Right cardiac atrium (tissue), 5 donors: ENCODE measurements at regions of chr1 and their contacts with region 1.

Region 1: GRCh38 chr1:44213222-44214112 is at the start of gene DMAP1:
- DNase-seq: peak; percentile 78 to 91 (median 90)
- ATAC-seq: peak; percentile 90 to 93
- H3K4me3 ChIP-seq: peak within 1 kb of the TSS; percentile 61
- H3K27ac ChIP-seq: peak within 1 kb of the TSS; percentile 28
- H3K4me1 ChIP-seq: peaks cover 8% of the 10 kb centered on the region
- H3K27me3 ChIP-seq: no peaks in the 10 kb centered on the region
- total RNA-seq, gene DMAP1: 26.2 to 35.9 (median 32.6) TPM

Region 2: DNA sequence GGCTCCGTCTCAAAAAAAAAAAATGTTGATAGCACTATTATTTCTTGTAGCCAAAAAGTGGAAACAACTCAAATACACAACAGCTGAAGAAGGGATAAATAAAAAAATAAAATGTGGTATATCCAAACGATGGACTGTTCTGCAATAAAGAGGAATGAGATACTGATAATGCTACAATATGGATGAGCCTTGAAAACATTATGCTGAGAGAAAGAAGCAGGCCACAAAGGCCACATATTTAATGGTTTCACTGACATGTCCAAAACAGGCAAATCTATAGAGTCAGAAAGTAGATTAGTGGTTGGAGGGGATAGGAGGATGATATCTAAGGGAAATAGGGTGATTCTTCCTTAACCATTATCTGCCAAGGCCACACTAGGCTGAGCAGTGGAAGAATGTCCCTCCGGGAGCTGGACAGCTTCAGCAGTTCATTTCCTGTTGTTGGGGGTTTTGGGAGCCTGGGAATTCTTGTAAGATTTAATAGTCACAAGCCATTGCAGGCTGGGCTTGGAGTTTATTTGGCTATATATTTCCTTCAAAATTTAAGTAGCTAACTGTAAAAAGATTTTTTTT is 452.6 kb before region 1 on chr1:
- intact Hi-C with region 1: no loop called
- DNase-seq: no peak
- ATAC-seq: no peak
- H3K4me3 ChIP-seq: no peak overlapping the region
- H3K27ac ChIP-seq: no peak overlapping the region
- H3K4me1 ChIP-seq: no peaks in the 10 kb centered on the region
- H3K27me3 ChIP-seq: no peaks in the 10 kb centered on the region

Region 3: DNA sequence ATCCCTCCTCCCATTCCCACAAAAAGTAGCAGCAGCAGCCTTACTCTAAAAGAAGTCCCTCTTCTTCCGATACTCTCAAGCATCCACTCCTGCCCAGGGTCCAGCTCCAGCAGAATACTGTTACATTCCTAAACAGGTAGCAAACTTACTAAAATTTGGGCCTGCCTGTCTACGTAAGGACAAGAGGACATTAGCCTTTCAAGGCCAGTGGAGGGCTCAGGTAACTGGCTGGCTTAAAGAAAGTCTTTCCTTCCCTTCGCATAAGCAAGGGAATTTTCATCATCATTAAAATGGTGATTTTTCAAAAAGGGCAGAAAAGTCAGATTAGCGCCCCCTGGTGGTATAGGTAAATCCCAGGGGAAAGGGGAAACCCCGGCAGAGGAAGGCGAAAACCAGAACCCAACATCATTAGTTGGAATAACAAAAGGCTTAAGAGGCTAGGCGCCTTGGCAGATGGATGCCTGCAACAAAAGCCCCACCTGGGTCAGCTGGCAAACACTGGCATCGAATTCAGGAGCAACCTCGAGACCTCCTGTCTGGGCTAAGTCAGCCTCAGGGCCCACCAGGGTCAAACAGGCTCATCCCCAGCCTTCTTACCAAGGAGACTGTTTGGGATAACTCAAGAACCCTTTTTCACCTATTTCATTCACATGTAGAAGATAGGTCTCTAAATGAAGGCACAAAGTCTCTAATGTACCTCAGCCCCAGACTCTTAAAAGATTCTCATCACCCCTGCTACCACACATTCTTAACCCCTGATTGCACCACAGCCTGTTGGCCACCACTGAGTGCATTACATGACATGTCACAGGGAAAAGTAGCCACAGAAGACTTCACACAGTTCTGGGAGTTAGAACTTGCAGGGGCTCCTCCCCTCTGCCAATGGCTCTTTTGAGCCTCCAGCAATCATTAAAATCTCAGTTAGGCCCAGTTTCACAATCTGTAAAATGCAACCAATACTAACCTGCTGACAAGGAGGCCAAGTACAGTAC is 104.9 kb after region 1 on chr1:
- intact Hi-C with region 1: loop called in 2 of 4 experiments (anchors 2 to 5 kb)
- DNase-seq: no peak
- ATAC-seq: no peak
- H3K4me3 ChIP-seq: no peak overlapping the region
- H3K27ac ChIP-seq: no peak overlapping the region
- H3K4me1 ChIP-seq: no peaks in the 10 kb centered on the region
- H3K27me3 ChIP-seq: no peaks in the 10 kb centered on the region

Region 4: DNA sequence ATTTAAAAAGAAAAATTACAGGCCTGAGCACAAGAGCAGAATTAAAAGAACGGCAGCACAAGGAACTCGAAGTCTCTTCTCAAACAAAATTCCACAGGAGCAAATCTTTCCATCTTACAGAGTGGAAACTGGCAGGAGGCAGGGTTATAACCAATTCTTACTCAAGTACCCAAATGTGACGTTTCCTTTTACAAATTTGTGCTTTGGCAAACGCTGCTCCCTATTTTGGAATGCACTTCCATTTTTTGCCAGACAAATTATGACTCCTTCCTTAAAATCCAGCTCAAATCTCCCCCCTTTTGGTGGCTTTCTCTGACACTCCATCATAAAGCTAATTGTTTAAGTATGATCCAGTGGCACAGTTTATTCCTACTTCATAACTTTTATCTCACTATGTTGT is 133.8 kb after region 1 on chr1:
- intact Hi-C with region 1: loop called in 1 of 4 experiments (anchors 10 kb)
- DNase-seq: no peak
- ATAC-seq: peak in 1 of 2 donors; percentile 39
- H3K4me3 ChIP-seq: no peak overlapping the region
- H3K27ac ChIP-seq: no peak overlapping the region
- H3K4me1 ChIP-seq: no peaks in the 10 kb centered on the region
- H3K27me3 ChIP-seq: no peaks in the 10 kb centered on the region

Region 5: GRCh38 chr1:44500181-44501046 is 286.9 kb after region 1 on chr1:
- intact Hi-C with region 1: loop called in 1 of 4 experiments (anchors 10 kb)
- DNase-seq: peak in 2 of 3 donors; percentile 17 to 50
- ATAC-seq: peak; percentile 55 to 68
- H3K4me3 ChIP-seq: peak overlapping the region; percentile 8
- H3K27ac ChIP-seq: no peak overlapping the region
- H3K4me1 ChIP-seq: no peaks in the 10 kb centered on the region
- H3K27me3 ChIP-seq: no peaks in the 10 kb centered on the region

Region 6: DNA sequence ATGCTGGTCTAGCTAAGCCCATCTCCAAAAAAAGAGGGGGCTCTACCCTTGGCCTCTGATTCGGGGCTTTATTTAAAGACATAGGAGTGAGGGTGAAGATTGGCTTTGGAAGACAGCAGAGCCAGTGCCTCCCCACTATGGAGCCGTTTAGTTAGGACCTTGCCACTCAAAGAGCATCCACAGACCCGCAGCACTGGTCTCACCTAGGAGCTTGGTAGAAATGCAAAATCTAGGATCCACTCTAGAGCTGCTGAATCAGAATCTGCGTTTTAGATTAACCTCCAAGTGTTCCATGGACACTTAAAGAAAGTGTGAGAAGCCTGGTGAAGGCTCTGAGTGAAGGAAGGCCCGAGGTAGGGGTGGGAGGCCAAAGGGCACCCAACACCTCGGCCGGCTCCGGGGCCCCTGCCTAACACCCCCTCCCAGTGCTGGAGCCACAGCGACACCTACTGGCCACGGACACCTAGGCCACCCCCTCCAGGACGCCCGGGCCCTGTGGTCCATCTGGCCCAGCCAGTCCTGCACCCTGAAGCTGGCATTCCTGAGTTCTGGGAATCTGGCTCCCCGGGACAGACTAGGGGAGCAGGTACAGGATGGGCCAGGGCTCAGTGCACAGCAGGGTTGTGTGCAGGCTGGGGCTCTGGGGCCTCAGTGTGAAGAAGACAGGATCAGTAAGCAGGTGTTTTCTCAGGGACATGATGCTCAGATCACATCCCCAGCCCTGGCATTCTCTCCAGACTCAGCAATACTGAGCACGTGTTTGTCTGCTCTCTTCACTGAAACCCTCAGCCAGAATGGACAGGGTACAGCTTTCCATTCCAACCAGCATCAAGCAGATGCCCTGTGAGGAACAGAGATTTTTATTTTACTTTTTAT is 381.6 kb after region 1 on chr1:
- intact Hi-C with region 1: loop called in 2 of 4 experiments (anchors 5 to 10 kb)
- DNase-seq: peak; percentile 80 to 93 (median 91)
- ATAC-seq: peak; percentile 92 to 94
- H3K4me3 ChIP-seq: no peak overlapping the region
- H3K27ac ChIP-seq: no peak overlapping the region
- H3K4me1 ChIP-seq: no peaks in the 10 kb centered on the region
- H3K27me3 ChIP-seq: no peaks in the 10 kb centered on the region